ENCODE measurements at regions of chr20 and their contacts with region 1.

Region 1: DNA sequence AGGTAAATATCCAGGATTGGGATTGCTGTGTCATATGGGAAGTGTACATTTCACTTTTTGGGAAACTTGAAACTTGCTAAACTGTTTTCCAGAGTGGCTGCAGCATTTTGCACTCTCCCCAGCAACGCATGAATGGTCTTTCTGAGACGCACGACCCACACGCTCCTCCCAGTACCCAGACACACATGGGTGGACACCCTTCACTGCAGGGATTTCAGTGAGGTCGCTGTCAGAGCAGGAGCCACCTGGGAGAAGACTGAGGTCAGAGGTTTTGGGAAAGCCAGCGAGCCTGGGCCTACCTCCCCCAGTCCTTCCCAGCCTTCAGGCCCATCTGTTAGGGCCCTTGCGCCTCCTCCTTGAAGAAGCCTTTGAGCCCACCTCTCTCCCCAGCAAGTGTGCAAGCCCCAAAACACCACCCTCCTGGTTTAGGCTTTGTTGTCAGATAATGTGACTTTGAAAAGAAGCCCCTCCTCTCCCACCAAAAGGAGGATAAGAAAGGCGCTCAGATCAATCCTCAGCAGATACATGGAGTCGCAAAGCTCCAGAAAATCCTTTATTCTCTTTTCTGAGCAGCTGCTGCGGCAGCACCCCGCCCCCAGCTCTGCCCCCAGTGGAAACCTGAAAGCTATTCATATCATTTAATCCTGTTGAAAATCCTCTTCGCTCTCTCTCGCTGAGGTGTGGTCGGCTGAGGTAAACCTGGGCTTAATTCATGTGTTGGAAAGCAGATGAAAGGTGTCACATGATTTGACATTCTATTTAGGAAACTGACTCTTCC is 12.7 kb upstream of the JAG1 start:
- DNase-seq: no peak
- CTCF ChIP-seq: no peak

Region 2: DNA sequence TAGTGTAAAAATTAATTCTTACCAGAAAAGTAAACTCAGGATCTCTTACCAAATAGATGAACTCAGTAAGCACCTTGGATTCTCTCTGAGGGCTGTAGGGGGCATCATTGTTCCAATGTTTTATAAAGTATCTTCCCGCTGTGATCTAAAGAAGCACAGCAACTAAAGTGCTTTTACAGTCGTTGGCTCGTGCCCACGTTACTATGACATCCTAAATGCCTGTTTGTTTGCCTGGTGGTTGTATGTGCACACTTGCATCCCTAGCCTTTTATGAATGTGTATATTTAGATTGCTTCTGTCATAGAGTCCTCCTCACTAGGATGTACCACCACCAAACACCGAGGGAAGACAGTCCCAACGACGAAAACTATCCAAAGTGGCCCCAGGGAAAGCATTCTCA is 216.9 kb before region 1 on chr20:
- CTCF ChIA-PET with region 1: no interaction called
- POLR2A ChIA-PET with region 1: no interaction called
- DNase-seq: peak; percentile 32
- CTCF ChIP-seq: peak; percentile 33

Region 3: DNA sequence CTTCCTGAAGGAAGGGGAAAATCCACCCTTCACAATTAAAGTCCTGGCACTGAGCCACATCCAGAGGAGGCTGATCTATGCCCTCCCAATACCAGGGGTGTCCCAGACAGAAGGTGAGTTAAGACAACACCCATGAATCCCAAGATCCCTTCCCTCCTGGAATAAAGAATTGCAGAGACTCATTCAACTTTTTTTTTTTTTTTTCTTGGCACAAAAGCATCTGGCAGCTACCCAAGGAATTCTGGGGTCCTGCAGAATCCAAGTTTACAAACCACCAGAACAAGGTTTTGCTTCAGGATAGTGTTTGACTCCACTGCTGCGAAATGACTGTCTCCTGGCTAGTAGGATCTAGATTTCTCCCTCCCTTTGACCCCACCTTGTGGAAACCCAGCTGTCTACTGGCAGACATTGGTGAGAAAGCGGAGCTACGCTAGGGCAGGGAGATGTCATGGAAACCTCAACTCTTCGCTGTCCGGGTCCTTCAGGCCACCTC is 50.2 kb before region 1 on chr20:
- CTCF ChIA-PET with region 1: no interaction called
- POLR2A ChIA-PET with region 1: no interaction called
- DNase-seq: no peak
- CTCF ChIP-seq: no peak

Region 4: GRCh38 chr20:10663756-10664155 is 22.8 kb before region 1 on chr20:
- CTCF ChIA-PET with region 1: no interaction called
- POLR2A ChIA-PET with region 1: no interaction called
- DNase-seq: no peak
- CTCF ChIP-seq: no peak

Region 5: GRCh38 chr20:10673988-10674711 is 12.4 kb before region 1 on chr20 and contains the start of gene JAG1:
- CTCF ChIA-PET with region 1: interaction called, 20 read pairs
- POLR2A ChIA-PET with region 1: no interaction called
- DNase-seq: peak; percentile 93
- CTCF ChIP-seq: no peak